ENCODE measurements at regions of chr4 and their contacts with region 1.

Region 1: GRCh38 chr4:37686373-37687193 is at the start of gene RELL1:
- DNase-seq: peak; percentile 97
- ATAC-seq: peak; percentile 88
- H3K4me3 ChIP-seq: peak within 1 kb of the TSS; percentile 85
- H3K27ac ChIP-seq: no peak within 1 kb of the TSS
- H3K4me1 ChIP-seq: peaks cover 10% of the 10 kb centered on the region
- H3K27me3 ChIP-seq: no peaks in the 10 kb centered on the region
- CTCF ChIP-seq: no peak
- total RNA-seq, gene RELL1: 14.6 and 19.5 TPM in 2 replicates

Region 2: DNA sequence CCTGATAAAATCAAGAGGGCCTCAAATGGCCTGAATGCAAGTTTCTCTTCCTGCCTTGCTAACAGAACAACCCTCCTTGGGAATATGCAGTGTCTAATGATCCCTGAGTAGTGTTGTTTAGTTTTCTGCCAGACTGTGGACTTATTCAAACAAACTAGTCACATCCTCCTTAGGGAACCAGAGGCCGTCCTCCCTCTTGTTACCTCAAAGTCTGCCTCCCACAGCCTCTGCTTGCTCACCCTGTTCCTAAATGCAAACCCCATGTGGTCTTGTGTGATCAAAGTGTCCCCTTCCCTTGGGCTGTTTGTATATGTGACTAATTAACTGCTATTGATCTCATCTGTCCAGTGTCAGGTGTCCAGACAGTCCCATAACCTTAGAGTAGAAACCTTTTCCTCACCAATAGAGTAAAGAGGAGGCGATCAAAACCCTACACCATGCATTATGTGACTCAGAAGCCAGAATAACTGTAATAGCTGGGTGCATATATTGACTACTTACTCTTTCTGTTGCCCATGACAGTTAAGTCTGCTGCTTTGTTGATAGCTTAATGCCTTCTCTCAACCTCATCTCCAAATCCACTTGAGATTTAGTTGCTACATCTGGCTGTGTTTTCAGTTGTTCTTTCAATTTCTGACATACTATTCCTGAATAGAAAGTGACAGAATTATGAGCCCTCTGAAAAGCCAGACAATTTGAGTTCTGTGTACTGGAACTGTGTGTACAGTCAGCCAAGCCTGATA is 915.0 kb before region 1 on chr4:
- CTCF ChIA-PET with region 1: no interaction called
- POLR2A ChIA-PET with region 1: no interaction called
- intact Hi-C with region 1: no loop called
- DNase-seq: no peak
- ATAC-seq: no peak
- H3K4me3 ChIP-seq: no peak overlapping the region
- H3K27ac ChIP-seq: no peak overlapping the region
- H3K4me1 ChIP-seq: no peaks in the 10 kb centered on the region
- H3K27me3 ChIP-seq: no peaks in the 10 kb centered on the region
- CTCF ChIP-seq: no peak

Region 3: DNA sequence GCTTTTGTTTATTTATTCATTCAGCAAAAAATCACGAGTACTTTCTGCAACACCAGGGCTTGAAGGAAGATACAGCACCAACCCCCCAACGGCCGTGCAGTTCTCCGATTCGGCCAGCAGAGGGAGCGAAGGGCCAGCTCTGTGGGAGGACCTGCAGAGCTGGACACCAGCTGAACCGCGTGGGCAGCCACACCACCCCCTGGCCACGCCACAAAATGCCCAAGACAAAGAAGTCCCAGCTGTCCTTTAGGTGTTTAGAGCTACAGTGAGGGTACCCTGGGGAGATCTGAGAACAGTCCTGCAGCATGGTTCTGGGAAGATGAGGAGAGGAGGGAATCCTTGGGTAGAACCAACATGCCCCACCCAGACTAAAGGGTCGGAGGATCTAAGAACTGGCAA is 83.5 kb before region 1 on chr4:
- CTCF ChIA-PET with region 1: interaction called, 6 read pairs
- POLR2A ChIA-PET with region 1: no interaction called
- intact Hi-C with region 1: loop called (anchors 2 kb)
- DNase-seq: peak; percentile 72
- ATAC-seq: peak; percentile 87
- H3K4me3 ChIP-seq: no peak overlapping the region
- H3K27ac ChIP-seq: no peak overlapping the region
- H3K4me1 ChIP-seq: peaks cover 16% of the 10 kb centered on the region
- H3K27me3 ChIP-seq: no peaks in the 10 kb centered on the region
- CTCF ChIP-seq: peak; percentile 89

Region 4: DNA sequence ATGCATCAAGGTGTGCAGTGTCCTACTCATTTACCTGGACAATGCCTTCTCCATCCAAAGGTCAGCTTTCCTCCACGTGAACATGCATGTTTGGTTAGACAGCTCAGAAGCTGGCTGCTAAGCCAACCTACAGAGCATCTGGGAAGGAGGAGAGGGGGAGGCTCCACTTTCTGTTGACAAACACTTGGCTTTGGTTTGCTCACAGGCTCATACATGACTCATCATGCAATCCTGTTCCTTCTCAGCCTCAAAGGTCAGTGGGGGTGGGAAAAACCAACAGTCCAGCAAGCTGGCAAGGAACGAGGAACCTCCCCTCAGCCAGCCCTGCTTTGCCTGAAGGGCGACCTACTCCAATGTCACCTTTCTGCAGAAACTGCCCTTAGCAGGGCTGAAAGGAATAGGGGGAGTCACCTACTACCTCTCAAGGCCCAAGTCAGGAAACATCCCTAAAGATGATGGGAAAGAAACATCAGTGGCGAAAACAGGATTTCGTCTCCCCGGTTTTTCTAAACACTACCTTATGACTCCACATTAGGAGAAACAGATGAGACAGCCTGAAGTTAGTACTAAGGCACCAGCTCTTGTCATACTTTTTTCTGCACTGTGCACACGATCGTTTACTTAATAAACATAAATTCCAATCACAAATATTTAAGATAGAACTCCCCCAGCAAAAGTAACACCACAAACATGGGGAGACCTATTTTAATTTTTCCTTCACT is 38.3 kb before region 1 on chr4:
- CTCF ChIA-PET with region 1: interaction called, 3 read pairs
- POLR2A ChIA-PET with region 1: no interaction called
- intact Hi-C with region 1: loop called (anchors 5 kb)
- DNase-seq: peak; percentile 90
- ATAC-seq: peak; percentile 98
- H3K4me3 ChIP-seq: no peak overlapping the region; the same call in 1 of the 2 replicates
- H3K27ac ChIP-seq: peak overlapping the region; percentile 54
- H3K4me1 ChIP-seq: peaks cover 21% of the 10 kb centered on the region
- H3K27me3 ChIP-seq: no peaks in the 10 kb centered on the region
- CTCF ChIP-seq: no peak